Ovary (tissue), 10 donors: ENCODE measurements at regions of chr5 and their contacts with region 1.

Region 1: DNA sequence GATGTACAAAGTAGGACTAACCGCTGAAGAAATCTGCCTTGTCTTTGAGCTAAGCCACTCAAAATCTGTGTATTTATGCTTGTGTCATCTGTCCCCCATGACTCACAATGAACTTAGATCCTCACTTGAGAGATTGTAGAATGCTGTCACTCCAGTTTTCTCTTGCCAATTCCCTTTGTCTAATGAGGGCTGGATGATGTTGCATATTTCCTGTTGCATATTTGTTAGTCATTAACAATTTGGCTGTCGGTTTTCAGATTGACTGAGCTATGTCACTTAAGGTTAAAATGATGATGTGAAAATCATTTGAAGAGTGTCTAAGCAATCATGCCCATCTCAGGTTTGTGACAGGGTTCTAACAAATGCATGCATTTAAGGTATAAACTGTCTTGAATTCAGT is 481.7 kb downstream of the CDH10 start:
- DNase-seq: no peak
- H3K4me3 ChIP-seq: no peak overlapping the region
- H3K27ac ChIP-seq: no peak overlapping the region
- H3K4me1 ChIP-seq: no peaks in the 10 kb centered on the region
- H3K27me3 ChIP-seq: no peaks in the 10 kb centered on the region
- CTCF ChIP-seq: no peak
- EP300 ChIP-seq: no peak
- POLR2A ChIP-seq: no peak

Region 2: GRCh38 chr5:23208959-23209431 is 954.1 kb before region 1 on chr5:
- intact Hi-C with region 1: loop called in 1 of 4 experiments (anchors 5 kb)
- DNase-seq: no peak
- H3K4me3 ChIP-seq: no peak overlapping the region
- H3K27ac ChIP-seq: no peak overlapping the region
- H3K4me1 ChIP-seq: no peaks in the 10 kb centered on the region
- H3K27me3 ChIP-seq: no peaks in the 10 kb centered on the region
- CTCF ChIP-seq: no peak
- EP300 ChIP-seq: no peak
- POLR2A ChIP-seq: no peak

Region 3: DNA sequence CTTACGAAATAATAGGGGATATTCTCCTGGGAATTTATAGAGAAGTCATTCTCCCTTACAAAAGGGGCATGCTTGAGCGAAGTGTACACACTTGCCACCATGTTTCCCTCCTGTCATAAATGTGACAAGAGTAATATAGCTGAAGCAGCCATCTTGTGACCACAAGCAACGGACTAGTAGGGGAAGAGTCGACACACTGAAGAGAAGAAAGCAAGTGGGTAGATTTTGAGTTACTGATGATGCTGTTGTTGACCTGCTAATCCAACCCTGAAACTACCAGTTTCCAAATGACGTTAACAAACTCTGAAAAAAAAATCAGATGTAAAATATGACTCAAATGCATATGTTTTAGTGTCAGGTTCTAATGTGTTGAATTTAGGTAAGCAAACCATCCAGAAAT is 131.2 kb after region 1 on chr5:
- intact Hi-C with region 1: no loop called
- DNase-seq: no peak
- H3K4me3 ChIP-seq: no peak overlapping the region
- H3K27ac ChIP-seq: no peak overlapping the region
- H3K4me1 ChIP-seq: no peaks in the 10 kb centered on the region
- H3K27me3 ChIP-seq: no peaks in the 10 kb centered on the region
- CTCF ChIP-seq: no peak
- EP300 ChIP-seq: no peak
- POLR2A ChIP-seq: no peak